Activated CD8-positive, alpha-beta T cell treated with anti-CD3 and anti-CD28 coated beads for 36 hours (primary cell): ENCODE measurements at regions of chr2 and their contacts with region 1.

Region 1: GRCh38 chr2:231482806-231483391 is 18.6 kb upstream of the NCL start:
- DNase-seq: peak; percentile 80
- ATAC-seq: peak; percentile 85
- H3K4me3 Mint-ChIP-seq: peak overlapping the region; percentile 77
- H3K27ac Mint-ChIP-seq: peak overlapping the region; percentile 90
- H3K4me1 Mint-ChIP-seq: peaks cover 11% of the 10 kb centered on the region
- H3K27me3 Mint-ChIP-seq: no peaks in the 10 kb centered on the region
- CTCF ChIP-seq: peak; percentile 91

Region 2: DNA sequence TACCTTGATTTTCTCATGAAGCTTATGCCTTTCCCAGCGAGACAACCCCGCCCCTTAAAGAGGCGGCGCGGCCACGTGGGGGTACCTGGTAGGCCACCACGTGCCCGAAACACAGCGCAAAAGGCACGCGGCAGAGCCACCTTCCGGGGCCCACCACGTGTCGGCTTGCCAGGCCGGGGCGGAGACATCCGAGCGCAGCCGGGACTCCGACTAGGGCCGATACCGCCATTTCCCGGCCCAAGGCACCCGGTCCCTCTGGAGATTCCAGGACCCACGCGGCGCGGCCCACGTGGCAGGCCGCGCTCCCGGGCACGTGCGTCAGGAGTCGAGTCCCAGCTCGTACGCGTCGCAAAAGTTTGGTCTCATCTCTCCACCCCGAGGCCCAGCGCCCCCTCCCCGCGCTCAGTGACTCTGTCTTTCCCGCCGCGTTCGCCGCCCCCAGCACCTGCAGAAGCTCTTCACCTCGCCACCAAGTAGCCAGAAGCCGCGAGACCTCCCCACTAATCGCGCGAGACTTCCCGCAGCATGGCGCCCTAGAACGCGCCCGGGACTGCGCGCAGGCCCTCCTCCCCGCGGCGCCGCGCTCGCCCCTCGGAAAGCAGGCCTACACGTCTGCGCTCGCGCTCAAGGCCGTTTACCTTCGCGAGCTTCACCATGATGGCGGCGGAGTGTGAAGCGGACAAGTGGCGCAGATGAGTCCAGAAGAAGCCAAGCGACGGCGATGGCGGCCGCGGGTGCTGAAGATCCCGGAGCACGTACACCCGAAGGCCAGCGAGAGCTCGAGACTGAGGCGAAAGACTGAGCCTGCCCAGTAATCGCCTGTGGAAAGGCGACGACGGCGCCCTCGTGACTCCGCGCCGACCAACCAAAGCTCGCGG is 19.0 kb before region 1 on chr2 and contains the start of gene NCL:
- CTCF ChIA-PET with region 1: interaction called, 86 read pairs
- POLR2A ChIA-PET with region 1: interaction called, 149 read pairs
- intact Hi-C with region 1: no loop called
- DNase-seq: peak; percentile 89
- ATAC-seq: peak; percentile 47
- H3K4me3 Mint-ChIP-seq: peak within 1 kb of the TSS; percentile 100
- H3K27ac Mint-ChIP-seq: peak within 1 kb of the TSS; percentile 98
- H3K4me1 Mint-ChIP-seq: peaks cover 38% of the 10 kb centered on the region
- H3K27me3 Mint-ChIP-seq: no peaks in the 10 kb centered on the region
- CTCF ChIP-seq: no peak
- total RNA-seq, gene NCL: 1,312 to 1,361 TPM

Region 3: GRCh38 chr2:231472816-231473215 is 10.1 kb before region 1 on chr2:
- CTCF ChIA-PET with region 1: interaction called, 86 read pairs
- POLR2A ChIA-PET with region 1: interaction called, 149 read pairs
- intact Hi-C with region 1: no loop called
- DNase-seq: no peak
- ATAC-seq: no peak
- H3K4me3 Mint-ChIP-seq: no peak overlapping the region
- H3K27ac Mint-ChIP-seq: no peak overlapping the region
- H3K4me1 Mint-ChIP-seq: peaks cover 3% of the 10 kb centered on the region
- H3K27me3 Mint-ChIP-seq: no peaks in the 10 kb centered on the region
- CTCF ChIP-seq: no peak

Region 4: DNA sequence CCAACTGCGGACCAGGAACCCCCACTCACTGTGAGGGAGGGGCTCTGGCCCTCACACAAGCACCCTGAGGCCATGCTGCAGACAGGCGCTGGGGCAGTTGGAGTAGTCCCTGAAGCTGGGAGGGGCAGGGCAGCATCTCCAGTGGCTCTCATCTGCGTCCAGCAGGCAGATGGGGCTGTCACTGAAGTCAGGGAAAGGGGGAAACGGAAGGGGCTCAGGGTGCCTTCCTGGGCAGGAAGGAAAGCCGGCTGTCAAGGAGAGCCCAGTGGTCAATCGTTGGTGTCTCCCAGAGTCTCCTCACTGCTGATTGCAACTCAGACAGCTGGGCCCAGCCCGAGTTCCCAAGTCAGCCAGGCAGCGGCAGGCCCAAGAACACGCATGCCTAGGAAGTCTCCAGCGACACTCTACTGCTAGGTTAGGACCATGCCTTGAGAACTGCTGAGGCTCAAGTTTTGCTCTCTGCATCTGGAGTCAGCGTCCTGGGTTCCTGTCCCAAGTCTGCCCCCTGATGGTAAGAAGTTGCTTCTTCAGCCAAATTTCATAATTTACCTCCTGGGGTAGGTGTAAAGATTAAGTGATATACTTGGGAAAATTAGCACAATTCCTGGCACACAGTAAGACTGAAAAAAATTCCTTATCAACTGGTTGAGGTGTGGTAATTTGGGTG is 74.8 kb after region 1 on chr2:
- CTCF ChIA-PET with region 1: interaction called, 14 read pairs
- POLR2A ChIA-PET with region 1: no interaction called
- intact Hi-C with region 1: no loop called
- DNase-seq: peak; percentile 74
- ATAC-seq: peak; percentile 96
- H3K4me3 Mint-ChIP-seq: no peak overlapping the region
- H3K27ac Mint-ChIP-seq: no peak overlapping the region
- H3K4me1 Mint-ChIP-seq: peaks cover 25% of the 10 kb centered on the region
- H3K27me3 Mint-ChIP-seq: no peaks in the 10 kb centered on the region
- CTCF ChIP-seq: peak; percentile 51

Region 5: DNA sequence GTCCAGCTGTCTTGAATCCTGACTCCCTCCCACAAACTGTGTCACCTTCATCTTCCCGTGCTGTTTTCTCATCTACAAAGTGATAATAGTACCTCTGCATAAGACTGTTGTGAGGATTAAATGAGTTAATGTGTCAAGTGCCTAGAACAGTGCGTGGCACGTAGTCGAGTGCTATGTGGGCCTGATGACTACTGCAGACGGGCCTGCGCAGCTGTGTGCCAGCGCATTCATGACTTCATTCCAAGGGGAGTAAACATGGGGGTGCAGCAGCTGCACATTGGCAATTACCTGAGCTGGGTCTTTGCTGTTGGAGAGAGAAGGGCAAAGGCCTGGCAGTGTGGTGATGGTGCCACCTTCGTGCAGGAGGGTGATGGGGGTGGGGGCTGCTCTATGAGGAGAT is 114.7 kb after region 1 on chr2:
- CTCF ChIA-PET with region 1: interaction called, 12 read pairs
- POLR2A ChIA-PET with region 1: no interaction called
- intact Hi-C with region 1: no loop called
- DNase-seq: no peak
- ATAC-seq: no peak
- H3K4me3 Mint-ChIP-seq: no peak overlapping the region
- H3K27ac Mint-ChIP-seq: no peak overlapping the region
- H3K4me1 Mint-ChIP-seq: peaks cover 4% of the 10 kb centered on the region
- H3K27me3 Mint-ChIP-seq: no peaks in the 10 kb centered on the region
- CTCF ChIP-seq: no peak

Region 6: DNA sequence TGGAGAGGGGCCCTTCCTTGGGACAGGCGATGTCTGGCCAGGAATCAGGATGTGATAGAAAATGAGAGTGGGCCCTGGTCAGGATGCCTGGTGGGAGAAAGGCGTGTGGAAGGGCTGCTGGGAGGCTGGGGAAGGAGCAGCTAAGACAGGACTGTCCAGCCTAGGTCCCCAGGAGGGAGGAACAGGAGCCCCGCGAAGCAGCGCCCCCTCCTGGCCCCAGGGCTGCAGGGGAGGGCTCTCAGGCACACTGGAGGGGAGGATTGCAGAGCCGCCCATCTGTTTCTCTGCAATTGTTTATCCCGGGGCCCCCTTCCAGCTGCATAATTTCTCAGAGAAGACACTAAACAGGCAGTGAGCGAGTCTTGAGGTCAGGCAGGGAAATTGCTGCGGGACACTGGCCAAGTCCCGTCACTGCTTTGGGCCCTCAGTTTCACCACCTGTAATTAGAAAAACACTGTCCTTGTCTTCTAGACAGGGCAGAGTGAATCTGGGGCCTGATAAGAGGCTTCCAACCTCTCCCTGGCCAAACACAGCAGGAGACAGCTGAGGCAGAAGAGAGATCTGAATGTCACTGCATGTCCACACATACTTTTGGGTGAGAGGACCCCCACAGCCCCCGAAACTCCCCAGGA is 447.2 kb after region 1 on chr2:
- CTCF ChIA-PET with region 1: no interaction called
- POLR2A ChIA-PET with region 1: no interaction called
- intact Hi-C with region 1: no loop called
- DNase-seq: peak; percentile 56
- ATAC-seq: no peak
- H3K4me3 Mint-ChIP-seq: no peak overlapping the region
- H3K27ac Mint-ChIP-seq: no peak overlapping the region
- H3K4me1 Mint-ChIP-seq: peaks cover 8% of the 10 kb centered on the region
- H3K27me3 Mint-ChIP-seq: peaks cover 25% of the 10 kb centered on the region
- CTCF ChIP-seq: peak; percentile 65